ENCODE measurements at regions of chr7 and their contacts with region 1.

Region 1: GRCh38 chr7:127447326-127447945 is 54.9 kb upstream of the ZNF800 start:
- DNase-seq: peak; percentile 68
- ATAC-seq: peak; percentile 100
- H3K4me3 Mint-ChIP-seq: no peak overlapping the region
- H3K27ac Mint-ChIP-seq: no peak overlapping the region
- H3K4me1 Mint-ChIP-seq: peaks cover 10% of the 10 kb centered on the region
- H3K27me3 Mint-ChIP-seq: peaks cover 3% of the 10 kb centered on the region
- CTCF ChIP-seq: peak; percentile 83

Region 2: GRCh38 chr7:127347567-127348246 is 99.7 kb before region 1 on chr7:
- CTCF ChIA-PET with region 1: interaction called, 31 read pairs
- POLR2A ChIA-PET with region 1: no interaction called
- intact Hi-C with region 1: loop called (anchors 5 kb)
- DNase-seq: peak; percentile 77
- ATAC-seq: peak; percentile 100
- H3K4me3 Mint-ChIP-seq: peak overlapping the region; percentile 56
- H3K27ac Mint-ChIP-seq: no peak overlapping the region
- H3K4me1 Mint-ChIP-seq: peaks cover 22% of the 10 kb centered on the region
- H3K27me3 Mint-ChIP-seq: no peaks in the 10 kb centered on the region
- CTCF ChIP-seq: no peak

Region 3: GRCh38 chr7:127353897-127354296 is 93.5 kb before region 1 on chr7:
- CTCF ChIA-PET with region 1: interaction called, 31 read pairs
- POLR2A ChIA-PET with region 1: no interaction called
- intact Hi-C with region 1: loop called (anchors 5 kb)
- DNase-seq: no peak
- ATAC-seq: no peak
- H3K4me3 Mint-ChIP-seq: no peak overlapping the region
- H3K27ac Mint-ChIP-seq: no peak overlapping the region
- H3K4me1 Mint-ChIP-seq: peaks cover 26% of the 10 kb centered on the region
- H3K27me3 Mint-ChIP-seq: no peaks in the 10 kb centered on the region
- CTCF ChIP-seq: no peak

Region 4: GRCh38 chr7:127392566-127393367 is 54.7 kb before region 1 on chr7 and contains the start of gene ZNF800:
- CTCF ChIA-PET with region 1: interaction called, 12 read pairs
- POLR2A ChIA-PET with region 1: no interaction called
- intact Hi-C with region 1: no loop called
- DNase-seq: peak; percentile 93
- ATAC-seq: peak; percentile 85
- H3K4me3 Mint-ChIP-seq: peak within 1 kb of the TSS; percentile 95
- H3K27ac Mint-ChIP-seq: peak within 1 kb of the TSS; percentile 96
- H3K4me1 Mint-ChIP-seq: peaks cover 54% of the 10 kb centered on the region
- H3K27me3 Mint-ChIP-seq: no peaks in the 10 kb centered on the region
- CTCF ChIP-seq: no peak
- total RNA-seq, gene ZNF800: 29.3 to 31.1 TPM

Region 5: DNA sequence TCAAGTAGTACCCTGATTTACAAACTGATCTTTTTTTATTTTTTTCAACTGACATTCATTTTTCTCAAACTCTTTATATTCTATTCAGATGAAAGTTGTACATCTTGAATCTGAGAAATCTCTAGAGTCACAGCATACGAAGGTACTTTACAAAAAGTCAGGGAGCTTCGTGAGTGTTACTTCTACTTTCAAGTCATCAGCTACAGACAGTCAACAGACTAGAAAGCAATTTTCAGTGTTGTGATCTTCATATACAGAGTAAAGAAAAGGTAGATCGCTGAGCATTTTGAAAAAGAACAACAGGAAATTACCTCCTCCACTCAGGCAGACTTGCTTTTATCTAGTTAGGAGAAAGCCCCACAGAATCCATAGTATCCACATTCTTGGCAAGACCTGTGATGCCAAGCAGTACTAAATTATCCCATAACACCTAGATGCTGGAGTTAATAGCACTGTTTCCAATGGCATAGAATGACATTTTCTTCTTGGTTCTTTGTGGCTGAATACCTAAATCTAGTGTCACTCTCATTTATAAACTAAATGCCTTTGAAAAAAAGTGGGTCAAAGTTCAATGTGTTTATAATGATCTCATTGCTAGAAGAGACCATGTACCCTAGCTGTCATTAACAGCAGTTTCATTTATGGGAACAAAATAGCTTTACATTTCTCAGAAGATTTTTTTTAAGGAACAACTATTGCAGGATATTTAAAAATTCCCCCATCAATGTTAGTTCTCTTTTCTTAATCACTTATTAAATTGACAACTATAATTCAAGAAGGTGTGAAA is 43.0 kb before region 1 on chr7:
- CTCF ChIA-PET with region 1: interaction called, 10 read pairs
- POLR2A ChIA-PET with region 1: no interaction called
- intact Hi-C with region 1: no loop called
- DNase-seq: no peak
- ATAC-seq: peak; percentile 80
- H3K4me3 Mint-ChIP-seq: peak overlapping the region; percentile 49
- H3K27ac Mint-ChIP-seq: peak overlapping the region; percentile 60
- H3K4me1 Mint-ChIP-seq: peaks cover 24% of the 10 kb centered on the region
- H3K27me3 Mint-ChIP-seq: no peaks in the 10 kb centered on the region
- CTCF ChIP-seq: no peak

Measured in activated CD8-positive, alpha-beta T cell treated with anti-CD3 and anti-CD28 coated beads for 36 hours (primary cell).